ENCODE measurements at regions of chr2 and their contacts with region 1.

Region 1: GRCh38 chr2:27663463-27664249 is at the starts of genes SLC4A1AP and SUPT7L:
- DNase-seq: peak; percentile 60 to 89 (median 66)
- ATAC-seq: peak; percentile 79
- H3K4me3 ChIP-seq: peak within 1 kb of the TSS; percentile 91
- H3K4me3 Mint-ChIP-seq: peak within 1 kb of the TSS; percentile 99
- H3K27ac ChIP-seq: peak within 1 kb of the TSS; percentile 90 to 96
- H3K27ac Mint-ChIP-seq: peak within 1 kb of the TSS; percentile 93
- H3K4me1 ChIP-seq: peaks cover 26% of the 10 kb centered on the region
- H3K4me1 Mint-ChIP-seq: peaks cover 59% of the 10 kb centered on the region
- H3K27me3 ChIP-seq: no peaks in the 10 kb centered on the region
- H3K27me3 Mint-ChIP-seq: no peaks in the 10 kb centered on the region
- CTCF ChIP-seq: no peak
- total RNA-seq, gene SLC4A1AP: 14.2 to 15.3 TPM
- total RNA-seq, gene SUPT7L: 48.5 to 52.2 TPM

Region 2: DNA sequence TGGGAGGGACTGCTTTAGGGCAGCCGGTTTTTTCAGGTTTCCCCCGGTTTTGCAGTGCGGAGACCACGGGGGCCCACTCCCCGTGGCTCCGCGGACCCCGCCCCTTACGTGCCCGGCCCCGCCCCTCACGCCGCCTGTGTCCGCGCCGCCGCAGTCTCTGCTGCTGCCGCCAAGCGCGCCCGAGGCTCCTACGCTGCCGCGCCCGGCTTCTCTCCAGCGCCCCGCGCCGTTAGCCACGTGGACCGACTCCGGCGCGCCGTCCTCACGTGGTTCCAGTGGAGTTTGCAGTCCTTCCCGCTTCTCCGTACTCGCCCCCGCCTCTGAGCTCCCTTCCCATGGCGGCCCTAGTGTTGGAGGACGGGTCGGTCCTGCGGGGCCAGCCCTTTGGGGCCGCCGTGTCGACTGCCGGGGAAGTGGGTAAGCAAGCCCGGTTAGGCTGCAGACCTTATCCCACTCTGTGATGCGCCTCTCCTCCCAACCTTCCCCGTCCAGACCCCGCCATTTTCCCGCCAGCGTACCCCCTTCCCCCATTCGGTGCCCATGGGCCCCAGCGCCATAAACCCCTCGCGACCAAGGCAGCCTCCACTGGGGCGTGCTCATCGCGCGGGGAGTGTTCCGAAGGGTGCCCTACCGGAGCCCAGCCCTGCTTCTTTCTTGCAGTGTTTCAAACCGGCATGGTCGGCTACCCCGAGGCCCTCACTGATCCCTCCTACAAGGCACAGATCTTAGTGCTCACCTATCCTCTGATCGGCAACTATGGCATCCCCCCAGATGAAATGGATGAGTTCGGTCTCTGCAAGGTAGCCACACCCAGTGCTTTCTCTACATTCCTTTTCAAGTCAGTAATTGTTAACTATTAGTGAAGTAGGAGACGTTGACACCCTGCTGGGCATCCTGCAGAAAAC is 446.2 kb before region 1 on chr2 and contains the start of gene CAD:
- CTCF ChIA-PET with region 1: no interaction called
- POLR2A ChIA-PET with region 1: no interaction called
- intact Hi-C with region 1: loop called in 1 of 2 experiments (anchors 10 kb)
- DNase-seq: peak; percentile 75 to 94 (median 84)
- ATAC-seq: peak; percentile 74
- H3K4me3 ChIP-seq: peak within 1 kb of the TSS; percentile 87
- H3K4me3 Mint-ChIP-seq: peak within 1 kb of the TSS; percentile 98
- H3K27ac ChIP-seq: peak within 1 kb of the TSS; percentile 67 to 75
- H3K27ac Mint-ChIP-seq: peak within 1 kb of the TSS; percentile 93
- H3K4me1 ChIP-seq: peaks cover 31% of the 10 kb centered on the region
- H3K4me1 Mint-ChIP-seq: peaks cover 45% of the 10 kb centered on the region
- H3K27me3 ChIP-seq: no peaks in the 10 kb centered on the region
- H3K27me3 Mint-ChIP-seq: no peaks in the 10 kb centered on the region
- CTCF ChIP-seq: no peak
- total RNA-seq, gene CAD: 20.0 to 20.3 TPM

Region 3: DNA sequence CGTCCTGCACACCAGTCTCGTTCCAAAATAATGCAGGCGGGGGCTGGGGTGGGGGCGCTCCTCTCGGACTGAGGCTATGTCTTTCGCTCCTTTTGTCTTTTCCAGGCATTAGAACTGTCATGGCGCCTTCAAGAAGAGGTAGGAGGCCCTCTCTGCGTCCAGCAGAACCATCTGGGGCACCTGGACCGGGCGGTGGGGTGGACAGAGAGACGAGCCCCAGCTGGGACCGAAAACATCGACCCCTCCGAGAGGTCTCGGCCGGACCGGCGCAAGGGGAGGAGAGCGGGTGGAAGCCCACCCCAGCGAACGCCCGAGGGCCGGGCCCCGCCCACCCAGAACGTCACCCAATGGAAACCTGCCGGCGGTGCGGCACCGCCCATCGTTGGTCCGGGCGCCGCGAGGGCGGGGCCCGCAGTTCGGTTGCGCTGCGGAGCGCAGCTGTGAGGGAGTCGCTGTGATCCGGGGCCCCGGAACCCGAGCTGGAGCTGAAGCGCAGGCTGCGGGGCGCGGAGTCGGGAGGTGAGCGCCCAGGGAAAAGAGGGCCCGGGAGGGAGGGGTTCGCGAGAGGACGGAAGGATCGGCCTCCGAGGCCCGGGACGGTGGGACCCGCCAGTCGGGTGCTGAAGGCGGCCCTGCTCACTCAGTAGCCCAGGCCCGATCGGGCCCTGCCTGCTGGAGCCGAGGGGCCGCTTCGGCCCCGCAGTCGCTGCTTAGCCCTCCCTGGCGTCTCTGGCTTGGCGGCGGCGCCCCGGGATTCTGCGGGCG is 235.3 kb before region 1 on chr2 and contains the start of gene NRBP1:
- CTCF ChIA-PET with region 1: no interaction called
- POLR2A ChIA-PET with region 1: interaction called, 10 read pairs
- intact Hi-C with region 1: no loop called
- DNase-seq: peak; percentile 77 to 95 (median 90)
- ATAC-seq: peak; percentile 93
- H3K4me3 ChIP-seq: peak within 1 kb of the TSS; percentile 95
- H3K4me3 Mint-ChIP-seq: peak within 1 kb of the TSS; percentile 100
- H3K27ac ChIP-seq: peak within 1 kb of the TSS; percentile 80 to 90
- H3K27ac Mint-ChIP-seq: peak within 1 kb of the TSS; percentile 96
- H3K4me1 ChIP-seq: peaks cover 40% of the 10 kb centered on the region
- H3K4me1 Mint-ChIP-seq: peaks cover 41% of the 10 kb centered on the region
- H3K27me3 ChIP-seq: no peaks in the 10 kb centered on the region
- H3K27me3 Mint-ChIP-seq: no peaks in the 10 kb centered on the region
- CTCF ChIP-seq: no peak
- total RNA-seq, gene NRBP1: 169 to 181 TPM

Region 4: DNA sequence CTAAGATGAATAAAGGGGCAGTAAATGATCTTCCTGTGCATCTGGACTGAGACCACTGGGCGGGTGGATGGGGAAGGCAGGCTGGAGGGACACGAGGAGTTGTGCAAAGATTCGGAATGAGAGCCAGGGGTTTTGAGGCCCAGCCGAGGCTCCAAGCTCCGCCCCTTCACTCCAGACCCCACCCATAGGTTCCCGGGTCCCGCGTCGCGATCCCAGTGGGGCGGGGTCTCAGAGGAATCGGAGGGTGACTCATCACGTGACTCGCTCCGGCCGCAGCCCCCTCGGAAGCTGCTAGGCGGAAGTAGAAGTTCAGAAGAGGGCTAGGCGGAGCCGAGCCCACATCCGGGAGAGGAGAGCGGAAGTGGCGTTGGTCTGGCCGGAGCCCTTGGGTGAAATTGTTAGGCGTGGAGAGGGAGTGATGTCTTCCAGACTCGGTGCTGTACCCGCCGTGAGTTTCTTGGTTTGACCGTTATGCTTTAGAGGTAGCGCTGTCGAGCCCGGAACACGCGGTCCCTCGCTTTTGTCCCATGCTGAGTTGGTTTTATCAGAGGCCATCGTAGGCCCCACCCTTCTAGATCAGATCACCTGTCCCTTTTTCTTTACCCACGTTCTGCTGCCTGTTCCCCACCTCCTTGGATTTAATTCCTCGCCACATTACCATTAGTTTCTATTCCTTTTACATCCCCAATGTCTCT is 80.8 kb before region 1 on chr2 and contains the start of gene ZNF512:
- CTCF ChIA-PET with region 1: no interaction called
- POLR2A ChIA-PET with region 1: interaction called, 3 read pairs
- intact Hi-C with region 1: loop called in 1 of 2 experiments (anchors 5 kb)
- DNase-seq: peak; percentile 53 to 91 (median 70)
- ATAC-seq: peak; percentile 81
- H3K4me3 ChIP-seq: peak within 1 kb of the TSS; percentile 74
- H3K4me3 Mint-ChIP-seq: peak within 1 kb of the TSS; percentile 94
- H3K27ac ChIP-seq: peak within 1 kb of the TSS; percentile 56 to 80
- H3K27ac Mint-ChIP-seq: peak within 1 kb of the TSS; percentile 92
- H3K4me1 ChIP-seq: peaks cover 46% of the 10 kb centered on the region
- H3K4me1 Mint-ChIP-seq: peaks cover 54% of the 10 kb centered on the region
- H3K27me3 ChIP-seq: no peaks in the 10 kb centered on the region
- H3K27me3 Mint-ChIP-seq: no peaks in the 10 kb centered on the region
- CTCF ChIP-seq: no peak
- total RNA-seq, gene ZNF512: 13.6 to 14.1 TPM

Region 5: GRCh38 chr2:27683390-27684071 is 19.9 kb after region 1 on chr2:
- CTCF ChIA-PET with region 1: interaction called, 49 read pairs
- POLR2A ChIA-PET with region 1: interaction called, 8 read pairs
- intact Hi-C with region 1: no loop called
- DNase-seq: peak; percentile 63 to 95 (median 81)
- ATAC-seq: peak; percentile 91
- H3K4me3 ChIP-seq: no peak overlapping the region
- H3K4me3 Mint-ChIP-seq: no peak overlapping the region
- H3K27ac ChIP-seq: no peak overlapping the region
- H3K27ac Mint-ChIP-seq: peak overlapping the region; percentile 58
- H3K4me1 ChIP-seq: peaks cover 12% of the 10 kb centered on the region
- H3K4me1 Mint-ChIP-seq: peaks cover 7% of the 10 kb centered on the region
- H3K27me3 ChIP-seq: no peaks in the 10 kb centered on the region
- H3K27me3 Mint-ChIP-seq: no peaks in the 10 kb centered on the region
- CTCF ChIP-seq: peak; percentile 99

Region 6: GRCh38 chr2:28810384-28811285 is 1147.0 kb after region 1 on chr2 and contains the start of gene SPDYA:
- CTCF ChIA-PET with region 1: no interaction called
- POLR2A ChIA-PET with region 1: no interaction called
- intact Hi-C with region 1: loop called in 1 of 2 experiments (anchors 5 kb)
- DNase-seq: peak; percentile 55 to 91 (median 74)
- ATAC-seq: peak; percentile 91
- H3K4me3 ChIP-seq: peak within 1 kb of the TSS; percentile 66
- H3K4me3 Mint-ChIP-seq: peak within 1 kb of the TSS; percentile 93
- H3K27ac ChIP-seq: no peak within 1 kb of the TSS
- H3K27ac Mint-ChIP-seq: peak within 1 kb of the TSS; percentile 74
- H3K4me1 ChIP-seq: peaks cover 16% of the 10 kb centered on the region
- H3K4me1 Mint-ChIP-seq: peaks cover 22% of the 10 kb centered on the region
- H3K27me3 ChIP-seq: no peaks in the 10 kb centered on the region
- H3K27me3 Mint-ChIP-seq: no peaks in the 10 kb centered on the region
- CTCF ChIP-seq: no peak
- total RNA-seq, gene SPDYA: 12.7 to 12.8 TPM

Measured in CD4-positive, alpha-beta T cell (primary cell).